Heart right ventricle (tissue), 16 donors: ENCODE measurements at regions of chr3 and their contacts with region 1.

Region 1: DNA sequence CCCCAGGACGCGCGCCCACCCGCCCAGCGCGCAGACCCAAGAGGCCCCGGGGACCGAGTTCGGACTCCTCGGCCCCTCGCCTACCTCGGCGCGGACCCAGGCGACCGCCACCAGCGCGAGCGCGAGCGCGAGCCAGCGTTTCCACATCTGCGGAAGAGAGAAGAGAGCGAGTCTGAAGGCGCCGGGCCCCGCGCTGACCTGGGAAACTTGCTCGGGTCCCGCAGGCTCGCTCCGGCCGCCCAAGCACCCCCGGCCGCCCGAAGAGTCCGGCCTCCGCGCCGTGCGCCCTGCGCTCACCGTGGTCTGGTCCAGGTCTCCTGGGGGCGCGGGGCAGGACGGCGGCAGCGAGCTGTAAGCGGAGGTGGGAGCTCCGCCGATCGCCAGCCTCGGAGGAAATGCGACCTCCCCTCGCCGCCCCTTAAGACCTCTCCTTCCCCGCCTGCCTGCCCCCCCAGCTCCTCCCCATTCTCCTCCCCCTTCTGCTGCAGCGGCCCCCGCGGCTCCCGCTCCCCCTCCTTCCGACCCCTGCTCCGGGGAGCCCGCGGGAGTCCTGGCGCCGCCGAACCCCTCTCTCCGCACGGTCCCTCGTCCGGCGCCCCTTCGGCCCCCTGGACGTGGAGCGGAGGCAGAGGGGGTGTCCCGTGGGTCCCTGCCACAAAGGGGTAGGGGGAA is at the start of gene FSTL1:
- DNase-seq: peak; percentile 73 to 74
- ATAC-seq: peak; percentile 78 to 89 (median 84)
- H3K4me3 ChIP-seq: peak within 1 kb of the TSS; percentile 75 to 99 (median 92)
- H3K27ac ChIP-seq: peak within 1 kb of the TSS; percentile 86 to 99 (median 96)
- H3K4me1 ChIP-seq: peaks cover 6 to 48% (median 40%) of the 10 kb centered on the region in 9 donors
- H3K27me3 ChIP-seq: peaks cover 0 to 38% (median 0%) of the 10 kb centered on the region in 7 donors
- CTCF ChIP-seq: no peak
- total RNA-seq, gene FSTL1: 100 to 346 (median 213) TPM

Region 2: GRCh38 chr3:120399372-120399771 is 51.4 kb before region 1 on chr3:
- intact Hi-C with region 1: no loop called
- DNase-seq: no peak
- ATAC-seq: peak in 1 of 8 donors; percentile 4
- H3K4me3 ChIP-seq: no peak overlapping the region
- H3K27ac ChIP-seq: no peak overlapping the region
- H3K4me1 ChIP-seq: no peaks in the 10 kb centered on the region
- H3K27me3 ChIP-seq: no peaks in the 10 kb centered on the region
- CTCF ChIP-seq: no peak

Region 3: GRCh38 chr3:120425572-120426250 is 25.0 kb before region 1 on chr3:
- intact Hi-C with region 1: loop called in 2 of 10 experiments (anchors 1 to 2 kb)
- DNase-seq: no peak
- ATAC-seq: peak in 6 of 8 donors; percentile 24 to 60 (median 43)
- H3K4me3 ChIP-seq: no peak overlapping the region
- H3K27ac ChIP-seq: peak overlapping the region; percentile 29 to 89 (median 86)
- H3K4me1 ChIP-seq: peaks cover 29 to 100% (median 93%) of the 10 kb centered on the region in 9 donors
- H3K27me3 ChIP-seq: no peaks in the 10 kb centered on the region
- CTCF ChIP-seq: no peak

Region 4: DNA sequence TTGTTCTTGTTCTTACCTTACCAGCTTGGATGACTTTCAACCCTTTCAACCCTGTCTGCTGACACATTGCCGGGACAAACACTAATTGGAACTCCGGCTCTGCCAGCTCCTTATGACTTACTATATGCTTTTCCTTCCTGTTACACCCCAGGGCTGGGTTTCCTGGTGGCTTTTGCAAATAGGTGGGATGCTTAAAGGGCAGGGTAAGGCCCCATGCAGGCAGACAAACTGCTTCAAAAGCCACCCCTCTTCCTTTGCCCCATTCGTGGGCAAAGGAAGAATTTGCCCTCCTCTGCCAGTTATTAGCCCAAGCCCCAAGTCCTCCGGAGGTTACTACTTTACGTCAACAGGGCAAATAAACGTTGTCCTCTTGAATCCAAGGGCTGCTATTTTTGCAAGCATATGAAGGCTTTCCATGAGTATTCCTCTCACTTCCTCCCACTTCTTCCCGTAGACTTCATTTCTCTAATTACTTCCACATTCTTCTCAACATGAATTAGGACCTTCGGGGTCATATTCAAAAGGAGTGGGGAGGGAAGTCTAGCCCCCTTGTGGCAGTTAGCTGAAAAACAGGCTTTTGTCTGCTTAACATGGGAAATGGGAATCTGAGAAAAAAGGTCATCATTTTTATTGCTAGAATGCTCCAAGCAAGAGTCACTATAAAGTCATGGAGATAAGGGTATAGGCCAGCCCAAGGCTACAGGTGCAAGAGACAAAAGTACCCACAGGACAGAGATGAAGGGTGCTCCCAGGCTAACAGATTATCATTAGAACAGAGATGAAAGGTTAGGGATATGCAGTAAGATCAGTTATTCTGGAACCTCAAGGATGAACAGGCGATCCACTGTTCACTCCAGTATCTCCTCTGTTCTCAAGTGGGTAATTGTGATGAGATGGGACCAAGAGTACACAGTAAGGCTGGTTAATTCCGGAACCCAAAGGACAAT is 56.4 kb after region 1 on chr3:
- intact Hi-C with region 1: loop called in 3 of 10 experiments (anchors 2 to 5 kb)
- DNase-seq: peak in 1 of 2 donors; percentile 48
- ATAC-seq: peak; percentile 51 to 85 (median 76)
- H3K4me3 ChIP-seq: no peak overlapping the region
- H3K27ac ChIP-seq: peak overlapping the region in 6 of 10 donors; percentile 6 to 40 (median 23)
- H3K4me1 ChIP-seq: peaks cover 5 to 22% (median 16%) of the 10 kb centered on the region in 9 donors
- H3K27me3 ChIP-seq: no peaks in the 10 kb centered on the region
- CTCF ChIP-seq: peak; percentile 46 to 80 (median 70)